ENCODE measurements at regions of chr5 and their contacts with region 1.

Region 1: GRCh38 chr5:116032094-116032517 is at the start of gene ARL14EPL:
- DNase-seq: peak; percentile 20 to 67 (median 32)
- ATAC-seq: peak; percentile 96
- H3K4me3 ChIP-seq: no peak within 1 kb of the TSS
- H3K27ac ChIP-seq: no peak within 1 kb of the TSS
- H3K4me1 ChIP-seq: no peaks in the 10 kb centered on the region
- H3K27me3 ChIP-seq: no peaks in the 10 kb centered on the region
- CTCF ChIP-seq: peak; percentile 37 to 68 (median 52); a peak in 4 of 6 replicates
- EP300 ChIP-seq: no peak; the same call in 1 of the 2 replicates
- POLR2A ChIP-seq: no peak
- RAD21 ChIP-seq: peak; percentile 67 to 75
- polyA plus RNA-seq, gene ARL14EPL: 0.06 to 0.14 TPM

Region 2: DNA sequence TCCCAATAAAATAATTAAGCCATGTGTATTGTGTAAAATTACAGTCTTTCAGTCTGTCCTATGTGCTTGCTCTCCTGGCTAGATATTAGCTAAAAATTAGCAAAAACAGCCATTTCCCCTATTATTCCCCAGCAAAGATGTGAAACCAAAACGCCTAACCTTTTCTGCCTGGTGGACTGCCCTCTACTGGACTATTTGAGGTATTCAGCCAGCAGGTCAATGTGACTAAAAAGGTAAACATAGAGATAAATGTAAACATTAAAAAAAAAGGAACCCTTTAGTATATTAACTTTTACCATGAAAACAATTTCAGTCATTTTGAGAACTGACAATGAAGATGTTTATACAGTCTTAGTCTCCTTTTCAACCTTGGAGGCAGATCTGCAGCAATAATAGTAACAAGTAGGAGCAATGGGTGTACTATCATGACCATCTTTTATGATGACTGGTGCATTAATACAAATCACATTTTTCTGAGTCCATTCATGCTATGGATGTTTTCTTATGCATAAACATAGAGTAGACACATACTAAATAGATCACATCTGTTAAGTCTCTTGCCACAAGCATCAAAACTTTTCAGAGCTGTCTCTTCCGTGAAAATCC is 200.8 kb before region 1 on chr5:
- CTCF ChIA-PET with region 1: no interaction called
- POLR2A ChIA-PET with region 1: no interaction called
- in situ Hi-C with region 1: no loop called
- intact Hi-C with region 1: loop called (anchors 10 kb)
- DNase-seq: peak; percentile 37 to 53 (median 42)
- ATAC-seq: peak; percentile 85
- H3K4me3 ChIP-seq: no peak overlapping the region
- H3K27ac ChIP-seq: no peak overlapping the region
- H3K4me1 ChIP-seq: no peaks in the 10 kb centered on the region
- H3K27me3 ChIP-seq: no peaks in the 10 kb centered on the region
- CTCF ChIP-seq: peak; percentile 54 to 66 (median 65)
- EP300 ChIP-seq: no peak
- POLR2A ChIP-seq: no peak
- RAD21 ChIP-seq: peak; percentile 19 to 36; a peak in 3 of 4 replicates

Region 3: DNA sequence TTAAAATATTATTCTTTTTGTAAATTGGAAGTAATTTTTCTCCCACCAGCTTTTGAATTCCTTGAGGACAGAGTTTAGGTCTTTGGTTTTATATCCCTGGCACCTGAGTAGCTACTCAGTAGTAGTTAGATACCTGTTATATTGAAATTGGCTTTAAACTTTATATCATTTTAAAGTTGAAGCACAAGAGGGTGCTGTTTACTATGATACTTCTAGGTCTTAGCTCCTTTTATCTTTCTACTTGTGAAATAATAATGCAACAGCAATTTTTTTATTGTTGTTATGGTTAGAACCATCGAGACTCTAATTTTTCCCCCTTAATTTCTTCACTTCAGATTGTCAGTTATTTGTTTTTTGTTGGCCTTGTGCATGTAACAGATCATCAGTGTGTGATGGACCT is 144.1 kb before region 1 on chr5:
- CTCF ChIA-PET with region 1: interaction called, 3 read pairs
- POLR2A ChIA-PET with region 1: no interaction called
- in situ Hi-C with region 1: no loop called
- intact Hi-C with region 1: loop called (anchors 1 kb)
- DNase-seq: no peak
- ATAC-seq: no peak
- H3K4me3 ChIP-seq: no peak overlapping the region
- H3K27ac ChIP-seq: no peak overlapping the region
- H3K4me1 ChIP-seq: no peaks in the 10 kb centered on the region
- H3K27me3 ChIP-seq: no peaks in the 10 kb centered on the region
- CTCF ChIP-seq: peak in 1 of 3 experiments; percentile 24; a peak in 1 of 6 replicates
- EP300 ChIP-seq: no peak
- POLR2A ChIP-seq: no peak
- RAD21 ChIP-seq: peak in 1 of 2 experiments; percentile 38; a peak in 2 of 4 replicates

Measured in K562 (cell line).